Breast epithelium (tissue), 4 donors: ENCODE measurements at regions of chr13 and their contacts with region 1.

Region 1: DNA sequence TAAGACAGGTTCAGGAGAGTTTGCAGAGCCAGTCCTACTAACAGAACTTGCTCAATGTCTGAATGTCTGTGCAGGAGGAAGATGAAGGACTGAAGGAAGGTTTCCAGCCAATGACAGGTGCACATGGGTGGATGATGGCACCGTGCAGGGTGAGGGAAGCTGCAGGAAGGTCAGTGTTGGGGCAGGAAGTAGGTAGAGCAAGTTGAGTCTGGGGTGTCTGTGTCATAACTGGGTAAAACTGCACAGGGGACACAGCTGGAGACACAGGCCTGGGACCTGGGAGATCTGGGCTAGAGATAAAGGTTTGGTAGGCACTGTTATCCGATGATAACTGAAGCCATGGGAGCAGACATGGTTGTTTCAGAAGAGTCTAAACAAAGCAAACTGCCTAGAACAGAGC is 116.9 kb downstream of the USP12 start:
- DNase-seq: no peak
- H3K4me3 ChIP-seq: no peak overlapping the region
- H3K27ac ChIP-seq: no peak overlapping the region
- H3K4me1 ChIP-seq: no peaks in the 10 kb centered on the region
- H3K27me3 ChIP-seq: no peaks in the 10 kb centered on the region
- CTCF ChIP-seq: no peak
- POLR2A ChIP-seq: no peak

Region 2: GRCh38 chr13:27038323-27038722 is 16.4 kb before region 1 on chr13:
- intact Hi-C with region 1: loop called (anchors 1 kb)
- DNase-seq: no peak
- H3K4me3 ChIP-seq: no peak overlapping the region
- H3K27ac ChIP-seq: no peak overlapping the region
- H3K4me1 ChIP-seq: no peaks in the 10 kb centered on the region
- H3K27me3 ChIP-seq: no peaks in the 10 kb centered on the region
- CTCF ChIP-seq: no peak
- POLR2A ChIP-seq: no peak

Region 3: GRCh38 chr13:27065582-27065981 is 10.8 kb after region 1 on chr13:
- intact Hi-C with region 1: no loop called
- DNase-seq: no peak
- H3K4me3 ChIP-seq: no peak overlapping the region
- H3K27ac ChIP-seq: no peak overlapping the region
- H3K4me1 ChIP-seq: no peaks in the 10 kb centered on the region
- H3K27me3 ChIP-seq: no peaks in the 10 kb centered on the region
- CTCF ChIP-seq: no peak
- POLR2A ChIP-seq: no peak

Region 4: GRCh38 chr13:27658546-27658945 is 603.8 kb after region 1 on chr13:
- intact Hi-C with region 1: no loop called
- DNase-seq: no peak
- H3K4me3 ChIP-seq: no peak overlapping the region
- H3K27ac ChIP-seq: no peak overlapping the region
- H3K4me1 ChIP-seq: no peaks in the 10 kb centered on the region
- H3K27me3 ChIP-seq: no peaks in the 10 kb centered on the region
- CTCF ChIP-seq: no peak
- POLR2A ChIP-seq: no peak